Pancreas (tissue), 10 donors: ENCODE measurements at regions of chr2 and their contacts with region 1.

Region 1: DNA sequence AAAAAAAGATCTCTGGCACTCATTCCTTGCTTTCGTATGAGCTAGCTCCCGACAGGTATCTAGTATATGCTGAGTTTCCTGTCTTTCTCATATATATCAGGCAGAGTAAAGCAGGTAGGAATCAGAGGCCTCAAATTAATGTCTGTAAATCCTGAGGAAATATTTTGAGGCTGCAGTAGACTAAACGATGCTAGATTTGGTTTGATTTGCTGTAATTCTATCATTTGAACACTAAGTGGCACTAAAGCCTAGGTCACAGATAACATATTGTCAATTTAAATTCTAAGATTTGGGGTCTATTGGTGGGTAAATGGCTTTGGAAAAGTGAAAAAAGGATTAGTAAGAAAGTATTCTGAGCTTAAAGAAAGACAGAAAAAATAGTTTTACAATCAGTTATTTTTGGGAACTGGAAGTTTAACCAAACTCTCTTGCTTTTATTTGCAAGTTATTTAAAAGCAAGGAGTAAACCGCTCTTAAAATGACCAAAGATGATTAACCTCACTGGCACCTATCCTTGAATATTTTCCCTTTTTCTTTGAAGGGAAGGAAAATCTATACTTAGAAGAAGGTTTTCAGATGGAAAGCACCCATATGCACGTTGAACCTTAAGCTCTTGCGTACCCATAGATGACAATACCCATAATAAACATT is 37.6 kb upstream of the SLC4A10 start:
- DNase-seq: no peak
- ATAC-seq: peak in 1 of 4 donors; percentile 57
- H3K4me3 ChIP-seq: no peak overlapping the region
- H3K27ac ChIP-seq: no peak overlapping the region
- H3K4me1 ChIP-seq: no peaks in the 10 kb centered on the region
- H3K27me3 ChIP-seq: no peaks in the 10 kb centered on the region
- CTCF ChIP-seq: peak in 3 of 4 donors; percentile 15 to 35 (median 30)

Region 2: GRCh38 chr2:161946489-161947107 is 360.0 kb after region 1 on chr2:
- intact Hi-C with region 1: loop called in 1 of 3 experiments (anchors 10 kb)
- DNase-seq: no peak
- ATAC-seq: peak in 2 of 4 donors; percentile 45 to 56
- H3K4me3 ChIP-seq: no peak overlapping the region
- H3K27ac ChIP-seq: no peak overlapping the region
- H3K4me1 ChIP-seq: no peaks in the 10 kb centered on the region
- H3K27me3 ChIP-seq: no peaks in the 10 kb centered on the region
- CTCF ChIP-seq: peak in 2 of 4 donors; percentile 33 to 34